ENCODE measurements at regions of chr15 and their contacts with region 1.

Region 1: GRCh38 chr15:73866881-73867410 is 6.4 kb upstream of the TBC1D21 start:
- DNase-seq: peak in 1 of 2 experiments; percentile 72
- H3K4me3 ChIP-seq: no peak overlapping the region
- H3K27ac ChIP-seq: no peak overlapping the region
- H3K4me1 ChIP-seq: peaks cover 0 to 2% (median 0%) of the 10 kb centered on the region in 4 experiments; a peak in 4 of 7 replicates
- H3K27me3 ChIP-seq: no peaks in the 10 kb centered on the region
- CTCF ChIP-seq: peak; percentile 65 to 92 (median 85)
- EP300 ChIP-seq: no peak
- POLR2A ChIP-seq: no peak
- RAD21 ChIP-seq: peak; percentile 52 to 69

Region 2: GRCh38 chr15:73771380-73772045 is 95.4 kb before region 1 on chr15:
- CTCF ChIA-PET with region 1: interaction called, 14 read pairs
- POLR2A ChIA-PET with region 1: no interaction called
- DNase-seq: no peak
- H3K4me3 ChIP-seq: no peak overlapping the region
- H3K27ac ChIP-seq: no peak overlapping the region
- H3K4me1 ChIP-seq: peaks cover 0 to 12% (median 3%) of the 10 kb centered on the region in 4 experiments; a peak in 3 of 7 replicates
- H3K27me3 ChIP-seq: no peaks in the 10 kb centered on the region
- CTCF ChIP-seq: peak; percentile 42 to 64 (median 52); a peak in 3 of 4 replicates
- EP300 ChIP-seq: no peak
- POLR2A ChIP-seq: no peak
- RAD21 ChIP-seq: peak; percentile 19 to 51; a peak in 2 of 4 replicates

Region 3: DNA sequence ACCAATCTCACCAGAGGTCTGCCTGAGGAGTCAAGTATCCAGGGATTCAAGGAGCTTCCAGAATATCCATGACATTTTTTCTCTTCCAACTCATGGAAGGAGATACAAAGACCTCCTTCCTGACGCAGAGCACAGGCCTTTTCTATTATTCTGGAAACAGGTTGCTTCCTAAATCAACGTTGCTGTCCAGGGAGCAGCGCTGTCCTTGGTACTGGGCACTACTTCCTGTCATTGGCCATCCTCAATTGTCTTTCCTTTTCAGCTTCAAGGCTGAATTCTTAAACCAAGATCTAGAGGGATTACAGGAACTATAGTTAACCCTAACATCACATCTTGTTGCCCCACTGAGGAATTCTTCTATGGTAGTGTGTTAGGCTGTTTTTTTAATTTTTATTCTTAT is 43.9 kb before region 1 on chr15:
- CTCF ChIA-PET with region 1: interaction called, 11 read pairs
- POLR2A ChIA-PET with region 1: no interaction called
- DNase-seq: no peak
- H3K4me3 ChIP-seq: no peak overlapping the region
- H3K27ac ChIP-seq: no peak overlapping the region
- H3K4me1 ChIP-seq: no peaks in the 10 kb centered on the region; a peak in 1 of 7 replicates
- H3K27me3 ChIP-seq: no peaks in the 10 kb centered on the region; a peak in 1 of 7 replicates
- CTCF ChIP-seq: no peak
- EP300 ChIP-seq: no peak
- POLR2A ChIP-seq: no peak
- RAD21 ChIP-seq: no peak

Region 4: DNA sequence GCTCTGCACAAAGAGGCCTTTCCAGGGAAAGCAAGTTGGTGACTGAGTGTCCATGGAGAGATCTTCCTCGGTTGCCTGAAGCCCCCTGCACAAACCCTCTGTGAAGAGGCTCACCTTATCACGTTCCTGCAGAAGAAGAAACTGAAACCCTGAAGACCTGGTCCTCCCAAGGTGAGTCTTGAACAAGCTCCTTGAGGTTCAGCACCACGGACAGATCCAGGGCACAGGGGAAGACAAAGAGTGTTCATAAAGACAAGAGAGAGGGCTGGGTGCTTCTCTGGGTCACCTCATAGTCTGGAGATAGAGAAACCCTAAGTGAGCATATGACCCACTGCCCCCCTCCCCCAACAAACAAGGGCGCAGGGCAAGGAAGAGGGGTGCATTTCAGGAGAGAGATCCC is 15.3 kb before region 1 on chr15:
- CTCF ChIA-PET with region 1: interaction called, 36 read pairs
- POLR2A ChIA-PET with region 1: no interaction called
- DNase-seq: peak; percentile 50 to 82
- H3K4me3 ChIP-seq: no peak overlapping the region
- H3K27ac ChIP-seq: no peak overlapping the region
- H3K4me1 ChIP-seq: peaks cover 0 to 2% (median 0%) of the 10 kb centered on the region in 4 experiments; a peak in 2 of 7 replicates
- H3K27me3 ChIP-seq: no peaks in the 10 kb centered on the region; a peak in 2 of 7 replicates
- CTCF ChIP-seq: no peak
- EP300 ChIP-seq: no peak
- POLR2A ChIP-seq: no peak
- RAD21 ChIP-seq: 0 out of 4 replicates have a peak, but pooled peaks of 1 of the 2 experiments have one; percentile 12

Region 5: GRCh38 chr15:73908030-73908821 is 41.3 kb after region 1 on chr15:
- CTCF ChIA-PET with region 1: interaction called, 113 read pairs
- POLR2A ChIA-PET with region 1: no interaction called
- DNase-seq: peak in 1 of 2 experiments; percentile 97
- H3K4me3 ChIP-seq: no peak overlapping the region
- H3K27ac ChIP-seq: no peak overlapping the region
- H3K4me1 ChIP-seq: peaks cover 0 to 5% (median 0%) of the 10 kb centered on the region in 4 experiments; a peak in 1 of 7 replicates
- H3K27me3 ChIP-seq: no peaks in the 10 kb centered on the region
- CTCF ChIP-seq: peak; percentile 96 to 98 (median 96)
- EP300 ChIP-seq: no peak
- POLR2A ChIP-seq: no peak
- RAD21 ChIP-seq: peak; percentile 94

Measured in H1 (cell line).